Aorta (tissue), 5 donors: ENCODE measurements at regions of chr13 and their contacts with region 1.

Region 1: GRCh38 chr13:31846182-31846950 is 107.0 kb downstream of the RXFP2 start:
- DNase-seq: peak; percentile 92 to 97
- ATAC-seq: peak; percentile 97
- H3K4me3 ChIP-seq: peak overlapping the region; percentile 80 to 98
- H3K27ac ChIP-seq: peak overlapping the region; percentile 46 to 78
- H3K4me1 ChIP-seq: peaks cover 0 to 2% of the 10 kb centered on the region in 2 donors
- H3K27me3 ChIP-seq: no peaks in the 10 kb centered on the region

Region 2: DNA sequence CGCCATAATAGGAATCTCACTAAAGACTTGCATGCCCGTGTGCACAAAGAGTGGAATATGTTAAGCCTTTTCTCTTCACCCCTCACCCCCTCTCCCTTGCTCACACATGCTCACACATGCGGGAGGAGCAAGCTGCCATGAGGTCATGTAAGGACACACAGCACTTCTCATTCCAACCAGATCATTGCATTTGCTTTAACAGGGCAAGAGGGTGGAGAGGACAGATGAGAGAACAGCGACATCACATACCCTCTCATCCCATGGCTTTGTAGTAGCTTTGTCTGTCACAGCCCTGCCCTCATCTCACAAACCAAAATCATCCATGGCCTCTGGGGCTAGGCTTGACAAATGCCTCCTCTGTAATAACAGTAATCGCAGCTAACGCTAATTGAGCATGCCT is 39.6 kb after region 1 on chr13:
- intact Hi-C with region 1: loop called in 1 of 2 experiments (anchors 5 kb)
- DNase-seq: no peak
- ATAC-seq: no peak
- H3K4me3 ChIP-seq: no peak overlapping the region
- H3K27ac ChIP-seq: no peak overlapping the region
- H3K4me1 ChIP-seq: no peaks in the 10 kb centered on the region
- H3K27me3 ChIP-seq: no peaks in the 10 kb centered on the region

Region 3: GRCh38 chr13:31896427-31896826 is 50.1 kb after region 1 on chr13:
- intact Hi-C with region 1: loop called in 1 of 2 experiments (anchors 5 kb)
- DNase-seq: no peak
- ATAC-seq: peak; percentile 67
- H3K4me3 ChIP-seq: no peak overlapping the region
- H3K27ac ChIP-seq: peak overlapping the region; percentile 22 to 79
- H3K4me1 ChIP-seq: peaks cover 2 to 9% of the 10 kb centered on the region in 2 donors
- H3K27me3 ChIP-seq: no peaks in the 10 kb centered on the region